ENCODE measurements at regions of chr6 and their contacts with region 1.

Region 1: GRCh38 chr6:33367009-33367714 is 24.5 kb upstream of the KIFC1 start:
- DNase-seq: no peak
- ATAC-seq: no peak
- H3K4me3 Mint-ChIP-seq: no peak overlapping the region
- H3K27ac Mint-ChIP-seq: peak overlapping the region; percentile 48
- H3K4me1 Mint-ChIP-seq: peaks cover 14% of the 10 kb centered on the region
- H3K27me3 Mint-ChIP-seq: no peaks in the 10 kb centered on the region
- CTCF ChIP-seq: no peak

Region 2: GRCh38 chr6:33344701-33345697 is 22.2 kb before region 1 on chr6:
- CTCF ChIA-PET with region 1: interaction called, 20 read pairs
- POLR2A ChIA-PET with region 1: no interaction called
- DNase-seq: peak; percentile 47
- ATAC-seq: peak; percentile 56
- H3K4me3 Mint-ChIP-seq: peak overlapping the region; percentile 26
- H3K27ac Mint-ChIP-seq: peak overlapping the region; percentile 21
- H3K4me1 Mint-ChIP-seq: peaks cover 18% of the 10 kb centered on the region
- H3K27me3 Mint-ChIP-seq: peaks cover 3% of the 10 kb centered on the region; the same call in 1 of the 2 replicates
- CTCF ChIP-seq: peak; percentile 43

Region 3: DNA sequence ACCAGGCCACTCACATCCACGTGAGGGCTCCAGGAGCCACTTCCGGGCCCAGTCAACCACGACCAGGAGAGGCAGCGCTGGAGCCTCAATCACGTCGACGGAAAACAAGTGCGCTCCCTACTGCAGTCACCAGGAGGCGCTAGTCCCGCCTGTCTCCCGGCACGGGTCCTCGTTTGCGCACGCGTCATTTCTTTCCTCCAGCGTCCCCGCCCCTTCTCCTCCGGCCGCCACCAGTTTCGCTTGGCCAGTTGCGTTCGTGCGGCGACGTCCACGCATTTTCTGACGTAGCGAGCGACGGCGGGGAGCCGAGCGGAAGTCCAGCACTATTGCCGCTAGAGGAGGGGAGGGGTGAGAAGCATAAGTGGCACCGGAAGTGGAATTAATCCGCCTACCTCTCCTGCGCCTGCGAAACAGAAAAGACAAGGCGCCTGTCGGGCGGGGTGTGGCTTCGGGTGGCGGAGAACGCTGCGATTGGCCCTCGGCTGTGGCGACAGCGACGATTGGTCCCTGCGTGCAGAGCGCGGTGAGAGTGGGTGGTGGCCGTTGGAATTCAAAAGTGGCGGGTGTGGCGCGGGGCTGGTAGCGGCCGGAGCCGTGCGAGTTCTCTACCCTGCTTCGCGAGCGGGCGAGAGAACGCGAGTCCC is 24.2 kb after region 1 on chr6 and contains the start of gene KIFC1:
- CTCF ChIA-PET with region 1: interaction called, 10 read pairs
- POLR2A ChIA-PET with region 1: no interaction called
- DNase-seq: peak; percentile 99
- ATAC-seq: peak; percentile 96
- H3K4me3 Mint-ChIP-seq: peak within 1 kb of the TSS; percentile 96
- H3K27ac Mint-ChIP-seq: peak within 1 kb of the TSS; percentile 99
- H3K4me1 Mint-ChIP-seq: peaks cover 34% of the 10 kb centered on the region
- H3K27me3 Mint-ChIP-seq: peaks cover 4% of the 10 kb centered on the region; the same call in 1 of the 2 replicates
- CTCF ChIP-seq: peak; percentile 89
- total RNA-seq, gene KIFC1: 79.5 to 97.3 TPM (median 83.7 TPM) in 3 replicates

Region 4: DNA sequence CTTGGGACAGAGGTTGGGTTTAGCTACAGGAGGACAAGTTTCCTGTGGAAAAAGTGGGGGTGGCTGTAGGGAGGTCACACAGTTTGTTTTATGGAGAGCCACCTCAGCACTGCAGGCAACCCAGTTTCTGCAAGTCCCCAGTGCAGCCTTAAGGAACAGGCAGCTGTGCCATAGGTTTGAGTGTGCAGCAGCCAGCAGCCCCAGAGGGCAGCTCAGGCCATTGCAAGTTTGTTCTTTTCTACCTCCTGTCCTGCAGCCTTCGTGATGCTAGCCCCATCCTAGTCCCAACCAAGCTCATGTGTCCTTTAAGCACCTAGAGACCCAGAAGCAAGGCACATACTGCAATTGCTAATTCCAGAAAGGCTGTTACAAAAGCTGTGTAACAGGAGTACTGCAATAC is 146.1 kb after region 1 on chr6:
- CTCF ChIA-PET with region 1: no interaction called
- POLR2A ChIA-PET with region 1: no interaction called
- DNase-seq: no peak
- ATAC-seq: no peak
- H3K4me3 Mint-ChIP-seq: no peak overlapping the region
- H3K27ac Mint-ChIP-seq: no peak overlapping the region
- H3K4me1 Mint-ChIP-seq: peaks cover 16% of the 10 kb centered on the region
- H3K27me3 Mint-ChIP-seq: peaks cover 15% of the 10 kb centered on the region
- CTCF ChIP-seq: no peak